A673 (cell line): ENCODE measurements at regions of chr6 and their contacts with region 1.

Region 1: DNA sequence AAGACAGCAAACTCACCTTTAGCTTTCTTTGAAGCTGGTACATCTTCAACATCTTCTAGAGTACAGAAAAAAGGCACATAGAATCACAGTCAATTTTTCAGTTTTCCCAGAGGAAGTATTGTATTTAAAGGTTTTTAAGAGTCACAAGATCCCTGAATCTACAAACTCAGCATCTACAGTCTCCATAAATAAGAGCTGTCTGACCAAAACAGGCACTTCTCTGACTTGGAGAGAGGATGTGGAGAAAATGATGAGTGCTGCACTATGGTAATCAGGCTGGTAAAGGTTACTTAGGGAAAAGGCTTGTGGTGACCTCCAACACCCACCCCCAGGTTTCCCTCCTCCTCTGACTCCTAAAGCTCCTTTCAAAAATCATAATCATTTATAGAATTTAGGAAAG is 228.0 kb downstream of the CLVS2 start:
- DNase-seq: peak; percentile 90
- H3K4me3 ChIP-seq: peak overlapping the region; percentile 3
- H3K27ac ChIP-seq: peak overlapping the region; percentile 99
- H3K4me1 ChIP-seq: peaks cover 73% of the 10 kb centered on the region
- H3K27me3 ChIP-seq: no peaks in the 10 kb centered on the region
- CTCF ChIP-seq: no peak

Region 2: GRCh38 chr6:122869437-122870024 is 354.5 kb before region 1 on chr6:
- CTCF ChIA-PET with region 1: interaction called, 21 read pairs
- POLR2A ChIA-PET with region 1: interaction called, 8 read pairs
- intact Hi-C with region 1: loop called (anchors 1 kb)
- DNase-seq: peak; percentile 91
- H3K4me3 ChIP-seq: no peak overlapping the region
- H3K27ac ChIP-seq: peak overlapping the region; percentile 59
- H3K4me1 ChIP-seq: peaks cover 54% of the 10 kb centered on the region
- H3K27me3 ChIP-seq: no peaks in the 10 kb centered on the region
- CTCF ChIP-seq: peak; percentile 87

Region 3: DNA sequence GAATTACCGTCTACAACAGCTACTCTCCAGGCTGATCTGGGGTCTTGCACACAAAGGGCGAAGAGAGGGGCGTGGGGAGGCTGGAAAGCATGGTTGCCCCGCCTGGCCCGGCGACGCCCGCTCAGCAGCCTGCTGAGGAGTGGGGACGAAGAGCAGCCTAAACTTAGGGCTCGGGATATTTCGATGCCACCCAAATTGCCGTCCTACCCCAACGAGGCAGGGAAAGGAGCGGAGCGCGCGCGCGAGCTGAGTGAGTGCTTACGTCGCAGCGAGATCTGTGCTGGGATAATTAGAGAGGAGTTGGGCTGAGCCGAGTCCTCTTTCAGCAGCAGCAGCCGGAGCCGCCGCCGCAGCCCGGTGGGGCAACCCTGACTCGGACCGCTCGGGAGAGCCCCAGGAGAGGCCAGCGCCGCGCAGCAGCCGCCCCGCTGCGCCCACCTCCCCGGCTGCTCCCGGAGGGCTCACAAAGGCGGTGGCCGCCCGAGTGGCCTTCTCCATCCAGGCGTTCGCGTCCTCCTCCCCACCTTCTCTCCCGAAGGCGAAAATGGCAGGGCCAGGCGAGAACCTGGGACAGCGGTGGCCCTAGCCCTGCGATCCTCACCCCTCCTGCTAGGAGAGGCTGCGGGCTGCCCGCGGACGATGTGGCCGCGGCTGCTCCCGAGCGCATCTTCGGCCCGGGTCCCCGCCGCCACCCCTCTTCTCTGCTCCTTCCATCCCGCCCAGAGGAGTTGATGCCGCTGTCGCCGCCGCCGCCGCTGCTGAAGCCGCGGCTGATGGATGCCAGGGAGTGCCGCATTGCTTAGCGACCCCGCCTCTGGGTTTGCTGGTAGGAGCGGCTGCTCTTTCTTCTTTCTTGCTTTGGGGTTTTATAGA is 227.9 kb before region 1 on chr6 and contains the start of gene CLVS2:
- CTCF ChIA-PET with region 1: no interaction called
- POLR2A ChIA-PET with region 1: no interaction called
- intact Hi-C with region 1: loop called (anchors 2 kb)
- DNase-seq: peak; percentile 95
- H3K4me3 ChIP-seq: peak within 1 kb of the TSS; percentile 86
- H3K27ac ChIP-seq: peak within 1 kb of the TSS; percentile 80
- H3K4me1 ChIP-seq: peaks cover 18% of the 10 kb centered on the region
- H3K27me3 ChIP-seq: no peaks in the 10 kb centered on the region
- CTCF ChIP-seq: no peak
- total RNA-seq, gene CLVS2: 84.9 and 89.6 TPM in 2 replicates

Region 4: GRCh38 chr6:123316733-123317323 is 92.8 kb after region 1 on chr6:
- CTCF ChIA-PET with region 1: no interaction called
- POLR2A ChIA-PET with region 1: no interaction called
- intact Hi-C with region 1: loop called (anchors 2 kb)
- DNase-seq: peak; percentile 62
- H3K4me3 ChIP-seq: no peak overlapping the region
- H3K27ac ChIP-seq: peak overlapping the region; percentile 23
- H3K4me1 ChIP-seq: peaks cover 7% of the 10 kb centered on the region
- H3K27me3 ChIP-seq: no peaks in the 10 kb centered on the region
- CTCF ChIP-seq: peak; percentile 72

Region 5: GRCh38 chr6:123489589-123489988 is 265.5 kb after region 1 on chr6:
- CTCF ChIA-PET with region 1: interaction called, 12 read pairs
- POLR2A ChIA-PET with region 1: no interaction called
- intact Hi-C with region 1: loop called (anchors 2 kb)
- DNase-seq: no peak
- H3K4me3 ChIP-seq: no peak overlapping the region
- H3K27ac ChIP-seq: peak overlapping the region; percentile 89
- H3K4me1 ChIP-seq: peaks cover 53% of the 10 kb centered on the region
- H3K27me3 ChIP-seq: no peaks in the 10 kb centered on the region
- CTCF ChIP-seq: no peak